BJ (cell line): ENCODE measurements at regions of chr3 and their contacts with region 1.

Region 1: DNA sequence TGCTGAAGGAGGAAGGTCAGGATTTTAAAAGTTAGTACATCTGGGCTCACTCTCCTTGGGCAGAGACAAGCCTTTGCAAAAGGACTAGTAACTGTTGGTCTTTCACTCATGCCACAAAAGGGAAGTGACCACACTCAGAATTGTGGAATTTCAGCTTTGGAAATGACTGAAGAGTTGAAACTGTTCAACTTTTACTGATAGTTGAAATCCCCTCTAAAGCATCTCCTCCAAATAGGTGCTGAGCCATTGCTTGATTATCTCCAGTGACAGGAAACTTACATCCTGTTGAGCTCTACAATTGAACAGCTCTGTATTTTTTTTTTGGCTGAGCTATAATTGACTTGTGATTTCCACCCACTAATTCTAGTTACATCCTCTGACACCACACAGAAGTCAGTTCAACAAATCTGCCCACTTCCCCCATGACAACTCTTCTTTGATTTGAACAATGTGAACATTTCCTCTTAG is 254.8 kb upstream of the TPRG1 start:
- DNase-seq: no peak
- H3K4me3 ChIP-seq: no peak overlapping the region
- H3K27me3 ChIP-seq: no peaks in the 10 kb centered on the region
- CTCF ChIP-seq: no peak

Region 2: GRCh38 chr3:188309437-188310269 is 607.3 kb before region 1 on chr3:
- CTCF ChIA-PET with region 1: no interaction called
- POLR2A ChIA-PET with region 1: no interaction called
- DNase-seq: no peak
- H3K4me3 ChIP-seq: no peak overlapping the region
- H3K27me3 ChIP-seq: no peaks in the 10 kb centered on the region
- CTCF ChIP-seq: no peak

Region 3: DNA sequence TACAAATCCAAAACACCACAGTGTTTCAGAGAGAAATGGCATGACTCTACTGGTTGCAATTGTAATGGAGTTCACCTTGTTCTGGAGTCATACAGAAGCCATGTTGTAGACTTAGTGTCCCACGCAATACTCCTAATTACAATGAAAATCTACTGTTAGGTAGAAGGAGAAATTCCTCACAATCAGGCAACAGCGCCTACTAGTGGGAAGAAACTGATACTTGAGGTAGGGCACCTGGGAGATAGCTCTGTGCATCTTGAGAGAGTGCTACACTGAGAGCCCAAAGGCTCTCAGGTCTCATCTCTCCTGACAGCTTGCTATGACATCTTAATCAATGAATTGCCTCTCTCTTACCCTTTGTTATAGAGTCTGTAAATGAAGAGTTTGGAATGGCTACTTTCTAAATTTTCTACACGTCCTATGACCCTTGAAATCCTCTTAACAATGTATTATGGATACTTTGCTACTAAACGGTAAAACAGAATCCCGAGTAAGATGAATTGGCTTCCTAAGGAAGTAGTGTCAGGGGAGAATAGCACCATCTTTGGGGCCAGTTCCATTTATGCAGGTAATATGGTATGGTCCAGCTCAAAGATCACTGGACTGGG is 167.9 kb before region 1 on chr3:
- CTCF ChIA-PET with region 1: no interaction called
- POLR2A ChIA-PET with region 1: no interaction called
- DNase-seq: no peak
- H3K4me3 ChIP-seq: no peak overlapping the region
- H3K27me3 ChIP-seq: no peaks in the 10 kb centered on the region
- CTCF ChIP-seq: peak; percentile 35; the same call in 1 of the 2 replicates

Region 4: GRCh38 chr3:188780193-188781147 is 136.5 kb before region 1 on chr3:
- CTCF ChIA-PET with region 1: no interaction called
- POLR2A ChIA-PET with region 1: no interaction called
- DNase-seq: no peak
- H3K4me3 ChIP-seq: no peak overlapping the region
- H3K27me3 ChIP-seq: no peaks in the 10 kb centered on the region
- CTCF ChIP-seq: no peak

Region 5: DNA sequence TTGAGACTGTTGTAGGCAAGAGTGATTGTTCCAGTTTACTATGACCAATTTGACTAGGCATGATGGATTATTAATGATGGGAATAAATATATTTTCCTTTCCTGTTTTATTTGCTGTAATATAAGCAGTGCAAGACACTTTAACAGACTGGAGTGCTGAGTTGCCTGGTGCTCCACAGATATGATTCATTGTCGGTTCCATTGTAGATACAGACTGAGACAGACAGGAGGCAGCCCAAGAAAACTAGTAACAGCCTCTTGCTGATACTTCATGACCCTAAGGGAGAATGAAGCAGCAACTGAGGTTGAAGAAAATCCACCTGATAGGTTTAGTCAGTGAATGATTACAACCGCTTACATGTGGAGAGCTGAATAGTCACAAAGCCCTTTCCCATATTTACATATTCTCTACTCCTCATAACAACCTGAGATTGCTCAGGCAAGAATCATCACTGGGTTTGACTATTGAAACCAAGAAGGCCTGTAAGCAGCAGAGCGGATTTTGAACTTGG is 19.7 kb after region 1 on chr3:
- CTCF ChIA-PET with region 1: interaction called, 6 read pairs
- POLR2A ChIA-PET with region 1: interaction called, 20 read pairs
- DNase-seq: no peak
- H3K4me3 ChIP-seq: no peak overlapping the region
- H3K27me3 ChIP-seq: no peaks in the 10 kb centered on the region
- CTCF ChIP-seq: no peak